Prostate gland (tissue), 2 donors: ENCODE measurements at regions of chr6 and their contacts with region 1.

Region 1: GRCh38 chr6:157184202-157185020 is 138.9 kb downstream of the TMEM242 start:
- DNase-seq: peak; percentile 82
- H3K4me3 ChIP-seq: no peak overlapping the region
- H3K27ac ChIP-seq: peak overlapping the region; percentile 69 to 70
- H3K4me1 ChIP-seq: no peaks in the 10 kb centered on the region
- H3K27me3 ChIP-seq: no peaks in the 10 kb centered on the region
- CTCF ChIP-seq: peak; percentile 81 to 96 (median 92)
- POLR2A ChIP-seq: no peak

Region 2: GRCh38 chr6:156564127-156564806 is 620.1 kb before region 1 on chr6:
- intact Hi-C with region 1: loop called (anchors 5 kb)
- DNase-seq: peak; percentile 78
- H3K4me3 ChIP-seq: no peak overlapping the region
- H3K27ac ChIP-seq: no peak overlapping the region
- H3K4me1 ChIP-seq: no peaks in the 10 kb centered on the region
- H3K27me3 ChIP-seq: no peaks in the 10 kb centered on the region
- CTCF ChIP-seq: peak; percentile 87 to 93 (median 90)
- POLR2A ChIP-seq: no peak

Region 3: GRCh38 chr6:157045831-157046454 is 138.5 kb before region 1 on chr6:
- intact Hi-C with region 1: loop called (anchors 5 kb)
- DNase-seq: no peak
- H3K4me3 ChIP-seq: no peak overlapping the region
- H3K27ac ChIP-seq: no peak overlapping the region
- H3K4me1 ChIP-seq: peaks cover 4% of the 10 kb centered on the region
- H3K27me3 ChIP-seq: no peaks in the 10 kb centered on the region
- CTCF ChIP-seq: peak; percentile 3 to 45 (median 38)
- POLR2A ChIP-seq: no peak

Region 4: DNA sequence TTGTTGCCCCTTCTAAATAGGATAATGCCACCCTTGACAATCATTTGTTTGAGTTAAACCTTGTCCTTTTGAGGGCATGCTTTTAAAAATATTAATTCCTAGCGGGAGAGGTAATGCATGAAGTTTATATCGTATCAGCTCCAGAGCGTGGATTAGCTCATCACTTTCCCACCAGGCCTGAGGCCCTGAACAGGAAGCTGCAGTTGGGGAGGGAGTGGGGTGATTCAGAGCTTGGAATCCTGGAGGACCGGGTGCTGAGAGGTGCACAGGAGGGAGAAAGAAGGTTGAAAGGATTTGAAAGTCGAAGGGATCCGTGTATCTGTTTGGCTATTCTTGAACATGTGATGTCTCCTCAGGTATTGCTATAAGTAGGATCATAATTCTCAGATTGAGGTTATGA is 221.6 kb after region 1 on chr6:
- intact Hi-C with region 1: no loop called
- DNase-seq: no peak
- H3K4me3 ChIP-seq: no peak overlapping the region
- H3K27ac ChIP-seq: no peak overlapping the region
- H3K4me1 ChIP-seq: no peaks in the 10 kb centered on the region
- H3K27me3 ChIP-seq: no peaks in the 10 kb centered on the region
- CTCF ChIP-seq: no peak
- POLR2A ChIP-seq: no peak